ENCODE measurements at regions of chr3 and their contacts with region 1.

Region 1: DNA sequence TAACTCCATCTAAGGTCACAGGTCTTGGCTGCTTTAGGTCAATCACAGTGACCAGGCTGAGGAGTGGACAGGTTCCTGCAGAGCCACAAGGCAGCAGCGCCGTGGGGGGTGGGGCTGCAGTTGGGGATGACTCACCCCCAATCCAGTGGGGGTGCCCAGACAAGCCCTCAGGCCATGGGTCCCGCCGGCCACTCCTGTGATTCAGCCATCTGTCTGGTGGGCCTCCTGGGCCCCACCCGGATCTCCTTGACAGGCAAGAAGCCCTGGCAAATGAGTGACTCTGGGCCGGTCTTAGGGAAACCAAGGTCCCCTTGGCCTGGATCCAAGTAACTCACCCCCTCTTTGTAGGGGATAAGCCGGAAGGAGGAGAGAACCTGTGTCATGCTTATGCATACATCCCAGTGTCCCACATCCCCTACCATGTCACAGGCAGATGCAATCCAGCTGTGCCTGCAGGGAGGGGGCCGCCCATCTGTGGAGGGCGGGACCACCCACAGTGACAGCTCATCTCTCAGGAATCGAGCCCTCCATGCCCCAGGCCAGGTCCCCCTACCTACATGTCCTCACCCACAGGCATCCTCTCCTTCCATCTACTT is 495 bp upstream of the COL7A1 start:
- DNase-seq: peak; percentile 98
- H3K4me3 ChIP-seq: peak overlapping the region in 2 of 3 experiments; percentile 60 to 79
- H3K27ac ChIP-seq: peak overlapping the region; percentile 97
- H3K4me1 ChIP-seq: peaks cover 82% of the 10 kb centered on the region
- H3K27me3 ChIP-seq: no peaks in the 10 kb centered on the region
- CTCF ChIP-seq: no peak

Region 2: DNA sequence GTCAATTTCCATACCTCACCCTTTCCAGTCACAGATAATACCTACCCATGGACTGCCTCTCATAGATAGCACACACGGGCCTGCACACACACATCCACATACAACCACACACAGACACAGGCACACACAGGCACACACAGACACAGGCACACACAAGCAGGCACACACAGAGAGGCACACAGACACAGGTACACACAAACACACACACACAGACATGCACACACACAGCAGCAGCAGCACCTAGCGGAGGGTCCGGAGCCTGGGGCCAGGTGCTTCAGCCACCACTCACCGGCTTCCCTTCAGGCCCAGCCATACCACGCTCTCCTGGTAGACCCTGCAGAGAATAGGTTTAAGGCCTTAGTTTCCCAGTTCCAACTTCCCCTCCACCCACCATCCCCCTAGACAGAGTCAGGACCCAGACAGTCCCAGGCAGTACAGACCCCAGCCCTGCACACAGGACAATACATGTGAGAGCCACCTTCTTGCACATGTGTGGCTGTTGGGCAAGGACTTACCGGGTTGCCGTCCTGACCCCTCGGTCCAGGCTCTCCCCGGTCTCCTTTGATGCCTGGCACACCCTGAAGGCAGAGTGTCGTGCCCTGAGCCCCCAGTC is 21.5 kb before region 1 on chr3:
- CTCF ChIA-PET with region 1: no interaction called
- dilution Hi-C with region 1: no loop called
- in situ Hi-C with region 1: no loop called
- intact Hi-C with region 1: no loop called
- DNase-seq: no peak
- H3K4me3 ChIP-seq: no peak overlapping the region
- H3K27ac ChIP-seq: no peak overlapping the region
- H3K4me1 ChIP-seq: no peaks in the 10 kb centered on the region
- H3K27me3 ChIP-seq: no peaks in the 10 kb centered on the region
- CTCF ChIP-seq: no peak

Region 3: DNA sequence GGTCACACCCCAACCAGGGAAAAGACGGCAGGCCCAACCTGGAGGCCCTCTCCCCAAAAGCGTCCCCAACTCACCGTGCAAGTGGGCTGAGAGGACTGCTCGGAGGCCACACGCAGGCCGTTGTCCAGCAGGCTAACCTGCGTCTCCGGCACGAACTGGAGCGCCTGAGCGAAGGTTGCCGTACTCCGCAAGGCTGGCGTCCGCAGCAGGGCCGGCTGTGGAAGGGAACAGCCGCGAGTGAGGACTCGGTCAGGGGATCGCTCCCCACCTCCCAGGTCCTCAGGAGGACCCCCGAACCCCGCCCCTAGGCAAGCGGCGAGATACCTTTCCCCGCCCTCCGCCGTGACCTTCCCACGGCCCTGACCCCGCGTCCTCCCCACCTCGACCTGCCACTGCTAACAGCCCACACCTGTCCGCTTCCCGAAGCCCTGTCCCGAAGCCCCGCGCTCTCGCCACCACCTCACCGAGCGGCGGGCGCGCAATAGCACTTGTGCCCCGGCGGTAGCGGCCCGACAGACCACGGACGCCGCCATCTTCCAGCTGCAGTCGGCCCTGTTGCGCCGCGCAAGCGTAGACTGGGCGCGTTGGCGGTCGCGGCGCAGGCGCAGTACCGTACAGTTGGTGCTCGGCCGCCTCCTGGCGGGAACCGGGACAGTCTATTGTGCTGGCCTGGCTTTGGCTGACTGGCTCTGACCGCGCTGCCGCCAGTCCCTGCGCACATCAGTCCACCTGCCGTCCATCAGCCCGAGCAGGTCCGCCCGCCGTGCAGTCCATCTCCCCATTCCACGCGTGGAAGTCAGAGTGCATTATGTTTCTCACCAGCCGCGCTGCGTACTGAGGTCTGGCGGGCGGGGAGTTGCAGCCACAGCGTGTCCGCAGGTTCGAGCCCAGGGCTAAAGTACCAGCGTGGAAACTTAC is 13.7 kb after region 1 on chr3 and contains the start of gene UQCRC1:
- CTCF ChIA-PET with region 1: no interaction called
- dilution Hi-C with region 1: no loop called
- in situ Hi-C with region 1: no loop called
- intact Hi-C with region 1: loop called (anchors 1 kb)
- DNase-seq: peak; percentile 89
- H3K4me3 ChIP-seq: peak within 1 kb of the TSS; percentile 46 to 99 (median 87)
- H3K27ac ChIP-seq: peak within 1 kb of the TSS; percentile 60
- H3K4me1 ChIP-seq: peaks cover 19% of the 10 kb centered on the region
- H3K27me3 ChIP-seq: no peaks in the 10 kb centered on the region
- CTCF ChIP-seq: peak; percentile 24 to 69
- total RNA-seq, gene UQCRC1: 321 to 490 TPM

Region 4: DNA sequence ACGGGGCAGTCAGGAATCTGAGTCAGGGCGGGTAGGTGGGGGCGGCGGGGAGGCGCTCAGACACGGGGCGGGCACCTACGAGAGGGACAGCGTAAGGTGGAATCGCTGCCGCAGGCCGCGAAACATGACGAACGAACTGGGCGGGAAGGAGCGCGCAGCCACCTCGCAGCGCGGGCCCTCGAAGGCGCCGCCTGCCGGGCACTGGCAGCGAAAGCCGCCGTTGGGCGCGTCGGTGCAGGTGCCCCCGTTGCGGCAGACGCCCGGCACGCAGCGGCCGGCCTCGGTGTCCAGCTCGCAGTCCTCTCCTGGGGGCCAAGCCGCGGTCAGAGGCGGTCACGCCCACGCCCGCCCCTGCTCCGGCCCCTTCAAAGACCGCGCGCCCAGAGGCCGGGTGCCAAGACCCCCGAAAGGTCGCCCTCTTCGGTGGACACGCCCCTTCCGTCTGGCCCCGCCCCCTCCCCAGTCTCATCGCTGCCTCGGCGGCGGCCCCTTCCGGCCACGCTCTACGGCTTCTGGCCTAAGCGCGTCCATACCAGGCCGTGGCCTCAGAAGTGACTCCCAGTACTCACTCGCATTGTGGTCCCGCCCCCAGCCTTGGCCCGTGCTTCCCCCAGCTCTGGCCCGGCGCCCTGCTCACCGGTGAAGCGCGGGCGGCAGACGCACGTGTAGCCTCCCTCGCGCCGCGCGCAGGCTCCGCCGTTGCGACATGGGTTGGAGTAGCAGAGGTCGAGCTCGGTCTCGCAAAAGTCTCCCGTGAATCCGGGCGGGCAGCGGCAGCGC is 60.6 kb after region 1 on chr3:
- CTCF ChIA-PET with region 1: no interaction called
- dilution Hi-C with region 1: loop called (anchors 10 kb)
- in situ Hi-C with region 1: no loop called
- intact Hi-C with region 1: loop called (anchors 1 kb)
- DNase-seq: peak; percentile 74
- H3K4me3 ChIP-seq: peak overlapping the region in 2 of 3 experiments; percentile 43
- H3K27ac ChIP-seq: no peak overlapping the region
- H3K4me1 ChIP-seq: peaks cover 8% of the 10 kb centered on the region
- H3K27me3 ChIP-seq: no peaks in the 10 kb centered on the region
- CTCF ChIP-seq: peak; percentile 52 to 64

Region 5: DNA sequence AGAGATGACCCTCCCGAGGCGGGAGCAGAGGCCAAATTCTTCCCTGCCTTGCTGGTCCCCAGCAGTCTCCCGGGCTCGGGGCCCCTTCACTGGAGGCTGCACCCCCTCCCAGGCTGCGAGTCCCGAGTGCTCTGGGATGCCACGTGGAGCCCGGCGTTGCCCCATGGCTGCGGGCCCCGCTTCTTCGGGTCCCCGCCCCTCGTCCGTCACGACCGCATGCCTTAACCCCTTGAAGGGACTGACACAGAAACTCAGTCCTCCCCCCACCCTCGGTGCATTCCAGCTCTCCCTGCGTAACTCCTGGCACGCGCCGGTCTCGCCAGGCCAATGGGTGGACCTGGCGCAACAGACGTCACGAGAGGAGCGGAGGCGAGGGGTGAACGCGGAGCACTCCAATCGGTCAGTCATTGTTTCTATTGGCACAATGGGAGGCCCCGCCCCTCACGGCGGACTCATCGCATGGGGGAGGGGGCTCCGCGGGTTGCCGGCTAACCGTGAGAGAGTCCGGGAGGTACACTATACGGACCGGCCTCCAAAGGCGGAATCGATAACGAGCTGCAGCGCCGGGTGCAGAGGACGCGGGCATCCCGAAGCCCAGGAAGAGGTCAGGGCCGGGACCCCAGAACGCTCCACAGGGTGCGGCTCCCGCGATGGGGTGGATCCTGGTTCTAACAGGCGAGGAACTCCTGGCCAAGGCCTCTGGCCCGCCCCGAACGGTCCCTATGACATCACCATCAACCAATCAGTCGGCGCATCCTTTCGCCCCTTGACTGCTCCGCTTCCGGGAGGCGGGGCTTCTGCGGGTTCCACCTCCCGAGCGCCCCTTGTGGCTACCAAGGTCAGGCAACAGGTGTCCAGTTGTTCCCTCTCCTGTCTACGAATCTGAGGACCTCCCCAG is 68.0 kb after region 1 on chr3:
- CTCF ChIA-PET with region 1: no interaction called
- dilution Hi-C with region 1: loop called (anchors 10 kb)
- in situ Hi-C with region 1: no loop called
- intact Hi-C with region 1: loop called (anchors 1 kb)
- DNase-seq: peak; percentile 99
- H3K4me3 ChIP-seq: peak overlapping the region; percentile 58 to 60 (median 59)
- H3K27ac ChIP-seq: peak overlapping the region; percentile 87
- H3K4me1 ChIP-seq: peaks cover 21% of the 10 kb centered on the region
- H3K27me3 ChIP-seq: no peaks in the 10 kb centered on the region
- CTCF ChIP-seq: peak; percentile 72 to 84